Transverse colon (tissue), 4 donors: ENCODE measurements at regions of chr5 and their contacts with region 1.

Region 1: GRCh38 chr5:115098041-115098702 is 71.5 kb downstream of the TRIM36 start:
- DNase-seq: peak; percentile 23
- H3K4me3 ChIP-seq: no peak overlapping the region
- H3K27ac ChIP-seq: no peak overlapping the region
- H3K4me1 ChIP-seq: peaks cover 0 to 7% (median 0%) of the 10 kb centered on the region in 4 donors
- H3K27me3 ChIP-seq: no peaks in the 10 kb centered on the region
- CTCF ChIP-seq: peak; percentile 58 to 69 (median 65)
- EP300 ChIP-seq: no peak
- POLR2A ChIP-seq: no peak

Region 2: DNA sequence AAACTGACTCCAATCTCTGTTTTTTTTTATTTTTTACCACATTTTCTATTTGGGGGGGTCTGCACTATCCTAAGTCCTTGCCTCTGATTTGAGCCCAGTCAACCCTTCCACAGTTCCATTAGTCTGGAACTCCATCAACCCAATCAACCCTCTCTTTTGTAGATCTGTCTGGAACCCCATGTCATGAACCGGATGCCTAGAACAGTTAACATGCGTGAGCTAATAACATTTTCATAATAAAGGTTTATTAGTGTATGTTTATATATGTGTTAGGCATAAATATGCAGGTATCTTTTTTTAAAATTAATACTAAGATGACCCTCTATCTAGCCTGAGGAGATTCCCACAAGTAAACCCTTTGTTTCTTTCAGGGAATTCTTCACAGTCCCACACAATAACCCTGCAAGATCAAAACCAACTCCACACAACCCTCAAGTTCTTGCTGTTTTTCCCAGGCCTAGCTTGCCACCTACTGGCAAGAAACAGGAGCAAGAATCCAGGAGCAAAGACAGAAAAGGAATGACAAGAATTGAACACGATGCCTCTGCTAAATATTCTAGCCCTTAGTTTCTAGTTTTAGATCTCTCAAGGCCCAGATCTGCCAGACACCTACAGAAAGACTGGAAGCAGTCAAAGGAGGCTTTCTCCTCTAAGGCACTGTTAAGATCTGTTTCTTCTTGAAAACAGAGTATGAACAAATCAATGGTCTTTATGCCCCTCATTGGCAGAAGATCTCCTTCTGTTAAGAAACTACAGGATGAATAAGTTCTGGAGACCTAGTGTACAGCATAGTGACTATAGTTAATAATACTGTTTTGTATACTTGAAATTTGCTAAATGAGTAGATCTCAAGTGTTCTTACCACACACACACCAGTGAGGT is 28.8 kb before region 1 on chr5:
- in situ Hi-C with region 1: no loop called
- intact Hi-C with region 1: no loop called
- DNase-seq: peak; percentile 8
- H3K4me3 ChIP-seq: no peak overlapping the region
- H3K27ac ChIP-seq: no peak overlapping the region
- H3K4me1 ChIP-seq: peaks cover 0 to 3% (median 0%) of the 10 kb centered on the region in 4 donors
- H3K27me3 ChIP-seq: peaks cover 7% of the 10 kb centered on the region
- CTCF ChIP-seq: peak; percentile 33 to 46 (median 39)
- EP300 ChIP-seq: no peak
- POLR2A ChIP-seq: no peak

Region 3: DNA sequence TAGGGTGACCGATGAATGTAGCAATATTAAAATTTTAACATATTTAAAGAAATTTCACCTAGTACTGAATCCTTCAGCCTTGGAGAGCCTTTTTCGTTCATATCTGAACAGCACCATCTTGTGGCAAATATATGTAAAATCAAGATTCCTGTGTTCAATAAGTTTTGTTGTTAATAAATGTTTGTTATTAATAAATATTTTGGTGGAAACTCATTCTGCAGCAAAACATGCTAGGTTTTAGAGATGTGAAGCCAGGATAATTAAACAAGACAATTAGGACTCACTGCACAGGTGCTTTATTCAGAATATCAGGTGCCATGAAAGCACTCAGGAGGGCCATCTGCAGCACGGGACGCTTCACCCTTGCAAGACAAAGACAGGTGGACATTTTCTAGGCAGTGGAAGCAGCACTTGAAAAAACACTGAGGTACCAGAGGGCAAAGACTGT is 488.5 kb after region 1 on chr5:
- in situ Hi-C with region 1: loop called in 1 of 4 experiments (anchors 25 kb)
- intact Hi-C with region 1: no loop called
- DNase-seq: no peak
- H3K4me3 ChIP-seq: no peak overlapping the region
- H3K27ac ChIP-seq: no peak overlapping the region
- H3K4me1 ChIP-seq: peaks cover 0 to 13% (median 0%) of the 10 kb centered on the region in 4 donors
- H3K27me3 ChIP-seq: no peaks in the 10 kb centered on the region
- CTCF ChIP-seq: peak; percentile 50 to 63 (median 60)
- EP300 ChIP-seq: no peak
- POLR2A ChIP-seq: no peak